Right ventricle myocardium inferior (tissue), 1 donor: ENCODE measurements at regions of chr1 and their contacts with region 1.

Region 1: DNA sequence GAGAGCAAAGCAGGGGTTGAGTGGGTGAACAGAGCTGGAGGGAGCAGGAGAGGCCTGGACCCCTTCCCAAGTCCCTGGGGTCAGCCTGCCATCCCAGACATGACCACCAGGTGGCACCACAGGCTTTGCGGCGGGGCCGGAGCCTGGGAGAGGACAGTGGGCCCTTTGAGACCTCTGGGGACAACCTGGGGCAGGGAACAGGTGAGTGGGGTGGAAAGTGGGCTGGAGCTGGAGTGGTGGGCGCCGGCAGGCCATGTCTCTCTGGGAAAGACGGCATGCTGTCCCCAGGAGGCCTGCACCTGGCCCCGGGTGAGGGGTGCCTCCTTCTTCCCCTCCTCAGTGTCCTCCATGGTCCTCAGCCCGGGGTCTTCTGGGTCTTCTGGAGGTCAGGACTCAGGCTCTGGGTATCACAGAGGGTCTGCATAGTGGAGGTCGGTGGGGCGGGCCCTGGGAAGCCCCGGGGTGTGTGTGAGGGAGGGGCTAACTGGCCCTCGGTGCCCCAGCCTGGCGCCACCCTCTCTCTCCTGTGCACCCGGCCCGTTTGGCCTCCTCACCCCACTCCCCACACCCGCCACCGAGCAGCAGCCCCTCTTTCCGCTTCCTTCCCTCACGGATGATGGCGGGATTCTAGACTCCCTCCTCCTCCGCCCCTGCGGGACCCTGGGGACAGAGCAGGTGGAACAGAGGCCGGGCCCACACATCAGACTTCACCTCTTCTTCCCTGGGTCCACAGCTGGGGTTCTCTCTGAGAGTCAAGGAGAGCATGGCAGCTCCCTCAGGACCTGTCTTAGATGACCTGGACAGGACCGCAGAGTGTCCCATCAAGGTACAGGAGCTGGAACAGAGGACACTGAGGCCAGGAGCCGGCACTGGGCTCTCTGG is 28.4 kb upstream of the PKP1 start:
- DNase-seq: peak; percentile 88
- ATAC-seq: peak; percentile 69

Region 2: GRCh38 chr1:201309426-201309825 is 54.6 kb after region 1 on chr1:
- intact Hi-C with region 1: loop called (anchors 2 kb)
- DNase-seq: peak; percentile 79
- ATAC-seq: peak; percentile 63

Region 3: GRCh38 chr1:201348211-201348566 is 93.3 kb after region 1 on chr1:
- intact Hi-C with region 1: loop called (anchors 1 kb)
- DNase-seq: no peak
- ATAC-seq: peak; percentile 37

Region 4: GRCh38 chr1:201361652-201362504 is 107.0 kb after region 1 on chr1:
- intact Hi-C with region 1: loop called (anchors 5 kb)
- DNase-seq: peak; percentile 34
- ATAC-seq: no peak

Region 5: DNA sequence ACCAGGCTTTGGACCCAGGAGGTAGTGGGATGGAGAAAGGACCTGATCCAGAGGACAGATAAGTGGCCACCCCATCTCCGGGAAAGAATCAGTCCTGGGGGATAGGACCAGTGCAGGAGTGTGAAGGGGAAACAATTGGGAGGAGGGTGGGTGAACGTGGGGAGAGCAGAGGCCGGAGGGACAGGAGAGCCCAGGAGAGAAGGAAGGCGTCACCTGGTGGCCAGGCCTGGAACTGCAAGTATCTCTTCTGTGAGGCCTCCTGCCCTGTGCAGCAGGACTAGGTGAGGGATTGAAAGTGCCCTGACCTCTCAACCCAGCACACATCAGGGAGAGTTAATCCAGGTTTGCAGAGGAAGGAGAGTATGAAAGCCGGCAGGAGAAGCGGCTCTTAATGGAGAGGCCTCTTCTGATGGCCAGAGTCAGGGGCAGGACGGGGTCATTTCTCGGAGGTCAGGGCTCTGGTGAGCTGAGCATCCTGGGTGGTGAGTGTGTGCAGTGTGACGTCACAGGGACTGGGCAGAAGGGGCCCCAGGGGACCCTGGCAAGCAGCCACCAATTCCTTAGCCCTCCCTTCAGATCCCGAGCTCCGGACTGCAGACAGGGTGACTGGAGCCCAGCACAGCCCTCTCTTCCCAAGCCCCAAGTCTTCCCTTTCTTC is 153.4 kb after region 1 on chr1:
- intact Hi-C with region 1: loop called (anchors 1 kb)
- DNase-seq: peak; percentile 83
- ATAC-seq: peak; percentile 89